ENCODE measurements at regions of chr20 and their contacts with region 1.

Region 1: GRCh38 chr20:36605399-36606157 is at the start of gene RAB5IF:
- DNase-seq: peak; percentile 98 to 100 (median 99)
- ATAC-seq: peak; percentile 91
- H3K4me3 ChIP-seq: peak within 1 kb of the TSS; percentile 78 to 100
- H3K4me3 Mint-ChIP-seq: peak within 1 kb of the TSS; percentile 97
- H3K27ac ChIP-seq: peak within 1 kb of the TSS; percentile 89 to 96
- H3K27ac Mint-ChIP-seq: peak within 1 kb of the TSS; percentile 97
- H3K4me1 ChIP-seq: peaks cover 26% of the 10 kb centered on the region
- H3K4me1 Mint-ChIP-seq: peaks cover 28% of the 10 kb centered on the region
- H3K27me3 ChIP-seq: no peaks in the 10 kb centered on the region
- H3K27me3 Mint-ChIP-seq: no peaks in the 10 kb centered on the region
- CTCF ChIP-seq: peak; percentile 80
- total RNA-seq, gene RAB5IF: 106 to 108 TPM

Region 2: GRCh38 chr20:36093025-36093803 is 512.4 kb before region 1 on chr20:
- CTCF ChIA-PET with region 1: no interaction called
- POLR2A ChIA-PET with region 1: no interaction called
- intact Hi-C with region 1: no loop called
- DNase-seq: peak in 7 of 9 experiments; percentile 5 to 60 (median 48)
- ATAC-seq: peak; percentile 53
- H3K4me3 ChIP-seq: peak overlapping the region; percentile 45 to 69
- H3K4me3 Mint-ChIP-seq: peak overlapping the region; percentile 90
- H3K27ac ChIP-seq: no peak overlapping the region
- H3K27ac Mint-ChIP-seq: peak overlapping the region; percentile 18
- H3K4me1 ChIP-seq: peaks cover 9% of the 10 kb centered on the region
- H3K4me1 Mint-ChIP-seq: peaks cover 15% of the 10 kb centered on the region
- H3K27me3 ChIP-seq: peaks cover 8 to 21% of the 10 kb centered on the region in 2 experiments
- H3K27me3 Mint-ChIP-seq: peaks cover 36% of the 10 kb centered on the region
- CTCF ChIP-seq: no peak

Region 3: GRCh38 chr20:36460648-36461599 is 144.7 kb before region 1 on chr20:
- CTCF ChIA-PET with region 1: no interaction called
- POLR2A ChIA-PET with region 1: no interaction called
- intact Hi-C with region 1: loop called (anchors 1 to 5 kb)
- DNase-seq: peak; percentile 78 to 97 (median 89)
- ATAC-seq: peak; percentile 83
- H3K4me3 ChIP-seq: peak overlapping the region; percentile 47 to 52
- H3K4me3 Mint-ChIP-seq: peak overlapping the region; percentile 80
- H3K27ac ChIP-seq: peak overlapping the region; percentile 69 to 90
- H3K27ac Mint-ChIP-seq: peak overlapping the region; percentile 89
- H3K4me1 ChIP-seq: peaks cover 45% of the 10 kb centered on the region
- H3K4me1 Mint-ChIP-seq: peaks cover 44% of the 10 kb centered on the region
- H3K27me3 ChIP-seq: no peaks in the 10 kb centered on the region
- H3K27me3 Mint-ChIP-seq: no peaks in the 10 kb centered on the region
- CTCF ChIP-seq: no peak

Region 4: DNA sequence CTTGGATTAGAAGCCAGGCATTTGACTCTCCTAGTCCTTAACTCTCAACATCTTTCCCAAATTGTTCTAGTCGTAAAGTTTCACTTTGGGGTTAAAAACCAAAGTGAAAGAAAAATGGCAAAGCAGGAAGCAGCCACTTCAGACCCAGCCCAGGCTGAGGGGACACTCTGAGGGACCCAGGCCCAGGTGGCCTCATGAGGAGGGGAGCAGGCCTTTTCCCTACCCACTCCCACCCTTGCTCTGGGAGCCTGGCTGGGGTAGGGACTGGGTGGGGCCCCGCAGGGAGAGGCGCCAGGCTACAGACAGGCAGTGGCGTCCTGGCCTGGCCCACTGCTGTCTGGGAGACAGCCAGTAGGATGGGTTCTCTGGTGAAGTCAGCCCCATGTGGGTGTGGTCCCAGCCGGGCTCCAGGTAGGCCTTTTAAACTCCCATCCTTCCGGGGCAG is 132.9 kb before region 1 on chr20:
- CTCF ChIA-PET with region 1: no interaction called
- POLR2A ChIA-PET with region 1: no interaction called
- intact Hi-C with region 1: no loop called
- DNase-seq: peak in 3 of 9 experiments; percentile 26 to 45 (median 39)
- ATAC-seq: peak; percentile 90
- H3K4me3 ChIP-seq: peak overlapping the region in 1 of 2 experiments; percentile 11
- H3K4me3 Mint-ChIP-seq: peak overlapping the region; percentile 60
- H3K27ac ChIP-seq: peak overlapping the region; percentile 35 to 63
- H3K27ac Mint-ChIP-seq: peak overlapping the region; percentile 52
- H3K4me1 ChIP-seq: peaks cover 30% of the 10 kb centered on the region
- H3K4me1 Mint-ChIP-seq: peaks cover 47% of the 10 kb centered on the region
- H3K27me3 ChIP-seq: no peaks in the 10 kb centered on the region
- H3K27me3 Mint-ChIP-seq: no peaks in the 10 kb centered on the region
- CTCF ChIP-seq: no peak

Region 5: DNA sequence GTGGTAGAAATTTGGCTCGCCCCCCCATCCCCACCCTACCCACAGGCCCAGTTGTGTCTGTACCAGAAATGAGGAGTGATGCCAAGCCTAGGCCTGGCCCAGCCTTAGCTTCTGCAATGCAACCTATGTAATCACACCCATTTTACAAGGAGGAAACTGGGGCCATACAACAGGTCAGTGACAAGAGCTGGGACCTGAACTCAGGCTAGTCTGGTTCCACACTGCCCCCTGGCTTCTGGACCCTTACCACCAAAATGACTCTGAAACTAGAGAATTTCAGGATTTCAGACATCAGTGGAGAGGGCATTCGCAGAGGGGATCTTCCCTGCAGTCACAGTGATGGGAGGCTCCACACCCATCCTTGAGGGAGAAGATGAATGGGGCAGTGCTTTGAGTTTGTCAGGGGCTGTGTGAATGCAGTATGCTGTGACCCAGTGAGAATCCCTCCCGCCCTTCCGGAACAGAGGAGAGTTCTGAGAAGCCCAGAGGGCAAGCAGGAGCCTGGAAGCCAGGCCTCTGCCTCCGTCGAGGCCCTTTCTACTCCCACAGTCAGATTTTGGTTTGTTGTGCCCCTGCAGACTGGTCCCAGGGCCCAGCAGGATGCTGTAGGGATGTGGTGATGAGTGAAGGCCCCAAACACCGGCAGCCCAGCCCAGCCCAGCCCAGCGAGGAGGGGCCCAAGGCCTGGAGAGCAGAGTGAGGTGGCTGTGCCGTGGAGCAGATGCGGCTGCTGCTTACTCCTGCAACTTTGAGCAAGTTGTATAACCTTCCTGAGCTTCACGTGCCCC is 112.4 kb before region 1 on chr20:
- CTCF ChIA-PET with region 1: no interaction called
- POLR2A ChIA-PET with region 1: no interaction called
- intact Hi-C with region 1: no loop called
- DNase-seq: peak in 2 of 9 experiments; percentile 33 to 39
- ATAC-seq: no peak
- H3K4me3 ChIP-seq: no peak overlapping the region
- H3K4me3 Mint-ChIP-seq: no peak overlapping the region
- H3K27ac ChIP-seq: peak overlapping the region in 1 of 2 experiments; percentile 84
- H3K27ac Mint-ChIP-seq: no peak overlapping the region
- H3K4me1 ChIP-seq: peaks cover 32% of the 10 kb centered on the region
- H3K4me1 Mint-ChIP-seq: peaks cover 37% of the 10 kb centered on the region
- H3K27me3 ChIP-seq: no peaks in the 10 kb centered on the region
- H3K27me3 Mint-ChIP-seq: no peaks in the 10 kb centered on the region
- CTCF ChIP-seq: no peak

Region 6: DNA sequence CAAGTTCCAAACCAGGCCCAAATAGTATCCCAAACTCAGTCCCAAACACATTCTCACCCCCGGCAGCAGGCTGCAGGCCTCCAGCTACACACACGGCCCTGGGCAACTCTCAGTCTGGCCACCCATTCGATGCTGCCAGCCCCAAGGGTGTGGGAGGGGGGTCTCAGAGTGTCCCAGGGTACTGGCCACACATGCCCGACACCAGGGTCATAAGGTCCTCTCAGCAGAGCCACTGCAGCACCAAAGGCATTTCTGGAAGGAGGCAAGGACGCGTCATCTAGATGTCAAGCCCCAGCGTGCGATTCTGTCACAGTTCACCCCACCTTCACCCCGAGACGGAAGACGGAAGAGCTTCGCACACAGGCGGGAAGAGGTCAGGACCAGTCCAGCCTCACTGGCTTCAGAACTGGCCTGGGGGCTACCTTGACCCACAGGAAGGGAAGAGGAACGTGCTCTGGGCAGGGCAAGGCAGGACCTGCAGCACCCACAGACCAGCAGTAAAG is 54.7 kb before region 1 on chr20:
- CTCF ChIA-PET with region 1: interaction called, 4 read pairs
- POLR2A ChIA-PET with region 1: no interaction called
- intact Hi-C with region 1: loop called (anchors 1 kb)
- DNase-seq: no peak
- ATAC-seq: no peak
- H3K4me3 ChIP-seq: no peak overlapping the region
- H3K4me3 Mint-ChIP-seq: no peak overlapping the region
- H3K27ac ChIP-seq: no peak overlapping the region
- H3K27ac Mint-ChIP-seq: no peak overlapping the region
- H3K4me1 ChIP-seq: no peaks in the 10 kb centered on the region
- H3K4me1 Mint-ChIP-seq: peaks cover 2% of the 10 kb centered on the region
- H3K27me3 ChIP-seq: no peaks in the 10 kb centered on the region
- H3K27me3 Mint-ChIP-seq: no peaks in the 10 kb centered on the region
- CTCF ChIP-seq: no peak

Region 7: GRCh38 chr20:36573103-36573794 is 32.3 kb before region 1 on chr20 and contains the start of gene TGIF2:
- CTCF ChIA-PET with region 1: interaction called, 11 read pairs
- POLR2A ChIA-PET with region 1: interaction called, 77 read pairs
- intact Hi-C with region 1: loop called (anchors 1 kb)
- DNase-seq: peak; percentile 84 to 96 (median 90)
- ATAC-seq: peak; percentile 79
- H3K4me3 ChIP-seq: peak within 1 kb of the TSS; percentile 96 to 99
- H3K4me3 Mint-ChIP-seq: peak within 1 kb of the TSS; percentile 95
- H3K27ac ChIP-seq: peak within 1 kb of the TSS; percentile 92 to 100
- H3K27ac Mint-ChIP-seq: peak within 1 kb of the TSS; percentile 99
- H3K4me1 ChIP-seq: peaks cover 41% of the 10 kb centered on the region
- H3K4me1 Mint-ChIP-seq: peaks cover 43% of the 10 kb centered on the region
- H3K27me3 ChIP-seq: no peaks in the 10 kb centered on the region
- H3K27me3 Mint-ChIP-seq: no peaks in the 10 kb centered on the region
- CTCF ChIP-seq: no peak
- total RNA-seq, gene TGIF2: 50.4 to 51.1 TPM

Region 8: GRCh38 chr20:36629719-36630681 is 24.4 kb after region 1 on chr20:
- CTCF ChIA-PET with region 1: interaction called, 8 read pairs
- POLR2A ChIA-PET with region 1: interaction called, 12 read pairs
- intact Hi-C with region 1: loop called in 1 of 2 experiments (anchors 2 kb)
- DNase-seq: peak; percentile 19 to 81 (median 60)
- ATAC-seq: peak; percentile 69
- H3K4me3 ChIP-seq: peak overlapping the region; percentile 22 to 25
- H3K4me3 Mint-ChIP-seq: peak overlapping the region; percentile 80
- H3K27ac ChIP-seq: peak overlapping the region; percentile 47 to 75
- H3K27ac Mint-ChIP-seq: peak overlapping the region; percentile 97
- H3K4me1 ChIP-seq: peaks cover 44% of the 10 kb centered on the region
- H3K4me1 Mint-ChIP-seq: peaks cover 56% of the 10 kb centered on the region
- H3K27me3 ChIP-seq: no peaks in the 10 kb centered on the region
- H3K27me3 Mint-ChIP-seq: no peaks in the 10 kb centered on the region
- CTCF ChIP-seq: no peak

Region 9: DNA sequence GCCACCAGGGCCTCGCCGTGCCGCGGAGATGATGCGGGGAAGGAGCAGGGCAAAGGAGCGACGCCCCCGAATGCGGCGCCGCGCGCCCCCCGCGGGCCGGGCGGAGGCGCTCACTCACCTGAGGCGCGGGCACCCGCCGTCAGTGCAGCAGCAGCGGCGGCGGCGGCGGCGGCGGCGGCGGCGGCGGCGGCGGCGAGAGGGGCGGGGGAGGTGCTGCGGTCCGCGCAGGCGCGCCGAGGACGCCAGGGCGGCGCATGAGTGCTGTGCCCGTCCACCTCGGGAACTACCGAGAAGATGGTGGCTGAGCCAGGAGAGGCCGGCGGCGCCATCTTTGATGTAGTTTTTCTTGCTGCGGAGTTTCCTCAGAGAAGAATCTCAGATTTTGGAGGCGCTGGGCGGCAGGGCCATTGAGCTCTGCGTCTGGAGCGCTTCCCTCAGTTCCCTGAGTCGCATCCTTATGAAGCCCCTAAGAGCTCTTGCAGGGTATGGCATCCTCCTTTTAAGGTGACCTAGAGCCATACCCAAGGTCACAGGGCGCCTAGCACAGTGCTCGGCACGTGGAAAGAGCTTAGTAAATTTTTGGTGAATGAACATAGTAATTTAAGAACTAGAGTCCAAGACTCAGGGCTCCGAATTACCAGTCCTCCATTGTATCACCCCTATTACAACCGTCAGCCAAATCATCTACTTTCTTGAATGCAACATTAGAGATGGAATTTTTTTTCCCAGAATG is 140.5 kb after region 1 on chr20 and contains the start of gene NDRG3:
- CTCF ChIA-PET with region 1: interaction called, 9 read pairs
- POLR2A ChIA-PET with region 1: interaction called, 4 read pairs
- intact Hi-C with region 1: loop called (anchors 1 to 2 kb)
- DNase-seq: peak; percentile 85 to 97 (median 92)
- ATAC-seq: peak; percentile 97
- H3K4me3 ChIP-seq: peak within 1 kb of the TSS; percentile 85 to 87
- H3K4me3 Mint-ChIP-seq: peak within 1 kb of the TSS; percentile 88
- H3K27ac ChIP-seq: peak within 1 kb of the TSS; percentile 44 to 74
- H3K27ac Mint-ChIP-seq: peak within 1 kb of the TSS; percentile 90
- H3K4me1 ChIP-seq: peaks cover 7% of the 10 kb centered on the region
- H3K4me1 Mint-ChIP-seq: peaks cover 29% of the 10 kb centered on the region
- H3K27me3 ChIP-seq: no peaks in the 10 kb centered on the region
- H3K27me3 Mint-ChIP-seq: no peaks in the 10 kb centered on the region
- CTCF ChIP-seq: no peak
- total RNA-seq, gene NDRG3: 12.9 to 15.1 TPM